Mammary epithelial cell (primary cell): ENCODE measurements at regions of chr18 and their contacts with region 1.

Region 1: GRCh38 chr18:24362758-24363157 is 34.9 kb downstream of the OSBPL1A start:
- DNase-seq: peak; percentile 45
- H3K4me3 ChIP-seq: no peak overlapping the region
- H3K27ac ChIP-seq: no peak overlapping the region
- H3K4me1 ChIP-seq: peaks cover 6% of the 10 kb centered on the region
- H3K27me3 ChIP-seq: no peaks in the 10 kb centered on the region
- CTCF ChIP-seq: no peak

Region 2: DNA sequence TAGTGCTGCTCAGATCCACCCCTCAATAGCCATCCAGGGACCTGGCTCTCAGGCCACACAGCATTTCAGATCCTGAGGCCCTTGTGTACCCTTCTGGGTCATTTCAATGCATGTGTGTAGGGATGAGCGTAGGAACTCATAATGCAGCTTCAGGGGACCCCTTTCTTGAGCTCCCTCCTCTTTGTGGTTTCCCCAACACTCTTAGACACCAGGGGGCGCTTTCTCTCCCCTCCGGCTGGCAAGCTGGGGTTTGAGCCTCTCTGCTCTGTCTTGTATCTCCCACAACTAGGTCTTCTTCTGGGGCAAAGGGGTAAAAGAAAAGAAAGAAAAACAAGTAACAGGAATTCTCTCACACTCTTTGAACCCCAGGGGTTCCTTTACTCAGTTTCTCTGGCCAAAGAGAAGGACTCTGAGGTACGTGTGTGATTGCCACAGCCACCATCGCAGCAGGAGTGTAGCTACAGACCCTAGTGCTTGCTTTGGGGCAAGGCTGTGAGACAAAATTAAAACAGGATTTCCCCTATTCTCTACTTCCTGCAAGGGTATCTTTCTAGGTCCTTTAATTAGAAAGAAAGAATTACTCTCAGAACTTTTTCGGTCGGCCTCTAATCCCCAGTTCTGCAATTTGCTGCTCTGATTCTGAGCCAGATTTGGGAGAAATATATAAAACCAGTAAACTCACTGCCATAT is 185.9 kb before region 1 on chr18:
- CTCF ChIA-PET with region 1: interaction called, 19 read pairs
- dilution Hi-C with region 1: no loop called
- in situ Hi-C with region 1: no loop called
- intact Hi-C with region 1: loop called (anchors 1 kb)
- DNase-seq: peak; percentile 27
- H3K4me3 ChIP-seq: no peak overlapping the region
- H3K27ac ChIP-seq: no peak overlapping the region
- H3K4me1 ChIP-seq: peaks cover 9% of the 10 kb centered on the region
- H3K27me3 ChIP-seq: no peaks in the 10 kb centered on the region
- CTCF ChIP-seq: peak; percentile 62 to 91

Region 3: DNA sequence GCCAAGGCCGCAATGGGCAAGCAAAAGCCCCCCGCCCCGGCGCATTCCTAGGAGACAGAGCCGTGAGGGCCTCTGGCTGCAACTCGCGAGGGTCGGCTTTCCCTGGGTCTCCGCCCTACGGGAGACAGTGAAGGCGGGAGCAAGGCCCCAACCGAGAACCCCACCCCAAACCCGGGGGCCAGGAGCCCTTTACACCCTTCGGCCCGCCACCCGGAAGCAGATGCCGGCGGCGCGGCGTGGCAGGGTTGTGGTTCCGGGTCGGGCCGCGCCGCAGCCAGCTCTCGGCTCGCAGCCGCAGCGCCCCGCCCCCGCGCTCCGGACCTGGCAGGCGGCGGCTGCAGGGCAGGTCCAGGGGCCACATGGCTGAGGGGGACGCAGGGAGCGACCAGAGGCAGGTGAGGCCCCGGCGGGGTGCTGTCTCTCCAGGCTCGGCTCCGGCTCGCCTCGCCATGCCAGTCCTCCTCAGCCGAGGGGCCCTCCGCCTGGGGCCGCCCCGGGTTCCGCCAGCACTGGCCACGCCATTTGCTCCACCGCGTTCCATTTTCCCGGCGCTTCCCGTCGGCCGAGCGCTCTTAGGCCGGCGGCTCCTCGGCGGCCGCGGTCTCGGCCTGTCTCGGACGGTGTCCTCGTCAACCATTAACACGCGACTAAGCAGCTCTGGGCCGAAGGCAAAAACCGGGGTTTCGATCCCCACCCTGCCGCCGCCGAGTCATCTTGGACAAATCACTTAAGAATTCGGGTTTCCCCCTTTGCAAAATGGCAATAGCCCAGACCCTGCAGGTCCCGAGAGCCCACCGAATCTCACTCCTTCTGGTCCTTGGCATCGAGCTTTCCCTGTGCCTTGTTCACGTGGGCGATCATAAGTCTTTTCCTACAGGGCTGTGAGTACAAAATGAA is 63.9 kb after region 1 on chr18 and contains the start of gene IMPACT:
- CTCF ChIA-PET with region 1: no interaction called
- dilution Hi-C with region 1: no loop called
- in situ Hi-C with region 1: no loop called
- intact Hi-C with region 1: loop called (anchors 5 kb)
- DNase-seq: peak; percentile 76
- H3K4me3 ChIP-seq: peak within 1 kb of the TSS; percentile 83 to 95 (median 87)
- H3K27ac ChIP-seq: peak within 1 kb of the TSS; percentile 88
- H3K4me1 ChIP-seq: peaks cover 12% of the 10 kb centered on the region
- H3K27me3 ChIP-seq: no peaks in the 10 kb centered on the region
- CTCF ChIP-seq: no peak
- total RNA-seq, gene IMPACT: 38.8 to 45.2 TPM